ENCODE measurements at regions of chr5 and their contacts with region 1.

Region 1: DNA sequence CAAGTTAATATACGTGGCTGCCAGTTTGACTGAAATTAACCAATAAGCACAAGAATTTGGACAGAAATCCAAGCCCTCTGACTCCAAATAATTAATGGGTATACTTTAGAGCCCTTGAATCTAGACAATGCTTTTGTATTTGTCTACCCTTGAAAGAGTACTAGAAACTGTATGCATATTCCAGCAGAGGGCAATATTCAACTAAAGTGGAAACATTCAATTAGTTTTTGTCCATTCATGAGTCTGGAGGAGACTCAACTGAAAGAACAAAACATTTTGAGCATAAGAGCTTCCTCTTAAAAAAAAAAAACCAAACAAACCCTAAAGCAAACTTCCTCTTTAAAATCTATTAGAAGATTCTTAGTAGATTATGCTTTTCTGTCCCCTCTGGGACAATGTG is 157.8 kb downstream of the ARHGEF28 start:
- DNase-seq: no peak
- H3K4me3 ChIP-seq: no peak overlapping the region
- CTCF ChIP-seq: peak; percentile 8

Region 2: GRCh38 chr5:73596705-73597328 is 187.0 kb before region 1 on chr5:
- CTCF ChIA-PET with region 1: interaction called, 517 read pairs
- POLR2A ChIA-PET with region 1: no interaction called
- DNase-seq: no peak
- H3K4me3 ChIP-seq: no peak overlapping the region
- CTCF ChIP-seq: peak; percentile 17

Region 3: DNA sequence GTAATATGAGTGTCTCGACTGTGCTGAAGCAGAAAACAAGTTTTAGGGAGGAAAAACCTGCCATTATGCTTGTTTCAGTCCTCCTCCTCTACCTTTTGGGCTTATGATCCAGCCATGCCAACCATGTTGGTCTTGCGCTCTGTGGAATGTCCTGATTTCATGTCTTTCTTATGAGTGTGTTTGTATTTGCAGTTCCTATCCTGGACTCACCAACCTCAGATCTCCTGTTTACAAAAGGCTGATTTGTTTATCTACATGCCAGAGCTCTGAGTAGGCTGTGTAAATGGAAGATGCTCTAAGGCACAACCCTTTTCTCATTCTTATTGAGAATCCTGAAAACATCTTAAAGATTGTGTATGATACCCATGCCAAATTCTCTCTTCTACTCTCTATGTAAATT is 19.2 kb before region 1 on chr5:
- CTCF ChIA-PET with region 1: interaction called, 11 read pairs
- POLR2A ChIA-PET with region 1: no interaction called
- DNase-seq: peak; percentile 55
- H3K4me3 ChIP-seq: no peak overlapping the region
- CTCF ChIP-seq: no peak

Region 4: GRCh38 chr5:73770172-73771025 is 13.4 kb before region 1 on chr5:
- CTCF ChIA-PET with region 1: interaction called, 16 read pairs
- POLR2A ChIA-PET with region 1: no interaction called
- DNase-seq: no peak
- H3K4me3 ChIP-seq: no peak overlapping the region
- CTCF ChIP-seq: no peak

Region 5: DNA sequence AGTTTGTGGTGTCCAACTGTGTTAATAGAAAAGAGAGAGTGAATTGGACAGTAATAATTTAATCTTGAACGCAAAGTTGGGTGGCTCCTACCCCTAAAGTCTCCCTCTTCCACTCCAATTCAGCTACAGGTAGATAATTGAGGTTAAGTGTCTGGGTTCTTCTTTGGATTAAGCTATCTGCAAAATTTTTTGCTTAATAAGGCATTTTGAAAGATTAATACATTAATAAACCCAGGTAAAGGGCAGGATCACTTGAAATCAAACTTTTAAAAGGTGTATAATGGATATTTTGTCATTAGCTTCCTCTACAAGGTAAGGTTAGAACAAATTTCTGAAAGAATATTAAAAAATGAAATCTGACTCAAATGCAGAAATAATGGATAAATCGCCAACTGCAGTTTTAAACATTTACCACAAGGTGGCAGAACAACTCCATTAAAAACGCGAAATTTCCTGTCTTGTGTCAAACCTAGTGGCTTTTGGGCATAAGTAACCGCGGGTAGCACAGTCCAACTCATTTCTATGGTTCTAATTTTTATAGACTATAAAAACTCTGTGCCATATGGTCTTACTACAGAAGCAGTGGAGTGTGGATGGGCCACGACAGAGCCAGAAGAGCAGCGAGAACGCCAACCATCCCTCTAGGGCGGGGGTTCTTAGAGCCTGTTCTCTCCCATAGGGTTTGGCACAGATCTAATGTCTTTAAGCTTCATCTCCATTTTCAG is 118.7 kb after region 1 on chr5:
- CTCF ChIA-PET with region 1: interaction called, 13 read pairs
- POLR2A ChIA-PET with region 1: no interaction called
- DNase-seq: peak; percentile 28
- H3K4me3 ChIP-seq: no peak overlapping the region
- CTCF ChIP-seq: peak; percentile 45

Measured in AG04449 (cell line).